Heart left ventricle (tissue), 16 donors: ENCODE measurements at regions of chr3 and their contacts with region 1.

Region 1: DNA sequence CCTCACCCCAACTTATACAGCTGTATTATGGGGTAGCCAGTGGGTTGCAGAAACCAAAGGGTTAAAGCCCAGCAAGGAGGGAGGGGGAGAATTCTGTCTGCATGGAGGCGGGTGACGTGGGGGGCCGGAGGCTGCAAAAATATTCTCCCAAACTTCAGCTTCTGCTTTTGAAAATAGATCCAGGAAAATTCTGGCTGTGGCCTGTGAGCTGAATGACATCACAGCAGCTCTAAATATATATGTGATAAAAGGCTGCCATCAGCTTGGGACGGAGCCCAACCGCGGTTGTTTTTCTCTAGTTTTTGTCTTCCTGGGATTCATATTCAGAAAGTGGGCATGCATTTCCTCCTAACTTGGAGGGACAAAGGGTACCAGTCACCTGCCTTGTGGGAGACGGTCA is 27.6 kb downstream of the MAPKAPK3 start:
- DNase-seq: peak in 2 of 5 donors; percentile 47 to 50
- ATAC-seq: peak in 2 of 4 donors; percentile 11 to 18
- H3K4me3 ChIP-seq: no peak overlapping the region
- H3K27ac ChIP-seq: peak overlapping the region; percentile 55 to 97 (median 85)
- H3K4me1 ChIP-seq: peaks cover 0 to 84% (median 36%) of the 10 kb centered on the region in 12 donors
- H3K27me3 ChIP-seq: no peaks in the 10 kb centered on the region
- CTCF ChIP-seq: no peak
- POLR2A ChIP-seq: no peak

Region 2: GRCh38 chr3:50620420-50620819 is 24.1 kb before region 1 on chr3:
- intact Hi-C with region 1: loop called in 2 of 10 experiments (anchors 2 kb)
- DNase-seq: peak in 1 of 5 donors; percentile 16
- ATAC-seq: no peak
- H3K4me3 ChIP-seq: peak overlapping the region in 2 of 12 donors; percentile 25 to 95
- H3K27ac ChIP-seq: peak overlapping the region; percentile 56 to 99 (median 97)
- H3K4me1 ChIP-seq: peaks cover 0 to 93% (median 75%) of the 10 kb centered on the region in 12 donors
- H3K27me3 ChIP-seq: no peaks in the 10 kb centered on the region
- CTCF ChIP-seq: no peak
- POLR2A ChIP-seq: no peak

Region 3: DNA sequence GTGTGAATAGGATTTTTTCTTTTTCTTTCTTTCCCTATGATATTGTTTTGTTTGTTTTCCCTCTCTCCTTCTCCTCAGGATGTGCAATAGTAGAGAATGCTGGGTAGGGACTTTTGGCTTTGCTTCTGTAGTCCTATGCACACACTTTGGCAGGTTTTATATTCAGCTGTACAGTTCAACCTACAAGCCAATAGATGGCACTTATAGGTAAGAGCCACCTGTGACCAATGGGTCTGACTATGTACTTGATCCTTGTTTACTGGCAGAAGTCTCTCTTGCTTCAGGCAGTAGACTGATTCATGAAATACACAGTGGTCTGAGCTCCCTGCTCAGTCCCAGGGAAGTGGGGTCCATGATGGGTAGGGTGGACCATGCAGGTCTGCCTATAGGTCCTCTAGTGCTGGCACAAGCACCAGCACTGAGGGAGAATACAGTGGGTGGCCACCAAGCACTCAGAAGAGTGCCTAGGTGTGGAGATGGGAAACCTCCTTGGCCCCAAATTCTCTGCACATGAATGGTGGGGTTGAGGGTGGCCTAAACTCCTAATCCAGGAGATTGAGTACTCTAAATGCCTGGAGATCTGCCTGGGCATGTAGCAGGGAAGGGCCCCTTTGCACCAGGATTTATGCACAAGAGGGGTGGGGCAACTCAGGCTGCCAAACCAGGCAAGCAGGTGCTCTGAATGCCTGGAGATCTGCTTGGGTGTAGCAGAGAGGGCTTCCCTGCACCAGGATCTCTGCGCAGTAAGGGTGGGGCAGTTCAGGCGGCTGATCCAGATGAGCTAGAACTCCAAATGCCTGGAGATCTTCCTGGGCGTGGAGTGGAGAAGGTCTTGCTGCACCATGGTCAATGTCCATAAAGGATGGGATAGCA is 206.3 kb after region 1 on chr3:
- intact Hi-C with region 1: no loop called
- DNase-seq: no peak
- ATAC-seq: no peak
- H3K4me3 ChIP-seq: no peak overlapping the region
- H3K27ac ChIP-seq: no peak overlapping the region
- H3K4me1 ChIP-seq: no peaks in the 10 kb centered on the region
- H3K27me3 ChIP-seq: no peaks in the 10 kb centered on the region
- CTCF ChIP-seq: no peak
- POLR2A ChIP-seq: no peak